GM23248 (cell line): ENCODE measurements at regions of chr1 and their contacts with region 1.

Region 1: DNA sequence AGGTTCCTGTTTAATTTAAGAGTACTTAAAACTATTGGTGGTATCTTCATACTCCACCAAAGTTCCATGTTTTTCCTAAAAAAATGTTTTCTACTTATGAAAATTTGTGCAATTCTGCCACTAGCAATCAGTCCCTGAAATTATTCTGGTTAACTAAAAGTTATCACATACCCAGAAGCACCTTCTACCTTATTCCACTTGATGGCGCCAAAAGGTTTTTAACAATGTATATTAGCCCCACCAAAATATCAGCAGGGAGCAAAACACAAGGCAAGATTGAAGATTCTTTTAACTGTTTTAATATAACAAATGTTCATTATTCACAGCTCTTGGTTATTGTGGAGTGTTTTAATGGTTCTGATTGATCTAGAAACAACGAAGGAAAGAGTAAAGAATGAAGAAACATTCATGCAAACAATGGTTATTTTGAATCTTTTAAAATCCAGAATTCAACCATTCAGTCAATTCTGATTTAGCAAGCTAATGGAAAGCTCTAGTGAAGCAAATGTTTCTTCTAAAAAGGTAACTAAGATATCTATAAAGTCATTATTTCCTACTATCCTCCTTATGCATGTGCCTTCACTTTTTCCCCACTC is 67.2 kb downstream of the TTLL7 start:
- DNase-seq: peak; percentile 81
- H3K4me3 ChIP-seq: no peak overlapping the region
- H3K27ac ChIP-seq: no peak overlapping the region
- H3K4me1 ChIP-seq: no peaks in the 10 kb centered on the region
- H3K27me3 ChIP-seq: no peaks in the 10 kb centered on the region

Region 2: DNA sequence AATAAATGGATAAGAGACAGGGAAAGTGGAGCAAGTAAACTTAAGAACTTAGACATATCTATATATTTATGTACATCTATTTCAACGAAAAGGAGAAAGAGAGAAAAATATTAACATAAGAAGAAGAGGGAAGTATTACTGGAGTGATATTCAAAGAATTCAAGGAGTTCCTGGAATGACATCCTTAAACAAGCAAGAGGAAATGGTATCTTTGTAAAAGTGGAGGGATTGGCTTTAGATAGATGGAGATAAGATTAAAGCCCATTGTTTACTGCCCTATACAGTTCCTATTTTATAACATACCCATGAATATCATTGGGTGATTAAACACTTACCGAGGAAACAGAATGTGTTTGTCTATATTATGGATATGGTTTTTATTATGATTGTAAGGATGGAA is 969.1 kb before region 1 on chr1:
- in situ Hi-C with region 1: no loop called
- DNase-seq: no peak
- H3K4me3 ChIP-seq: no peak overlapping the region
- H3K27ac ChIP-seq: no peak overlapping the region
- H3K4me1 ChIP-seq: no peaks in the 10 kb centered on the region
- H3K27me3 ChIP-seq: no peaks in the 10 kb centered on the region

Region 3: DNA sequence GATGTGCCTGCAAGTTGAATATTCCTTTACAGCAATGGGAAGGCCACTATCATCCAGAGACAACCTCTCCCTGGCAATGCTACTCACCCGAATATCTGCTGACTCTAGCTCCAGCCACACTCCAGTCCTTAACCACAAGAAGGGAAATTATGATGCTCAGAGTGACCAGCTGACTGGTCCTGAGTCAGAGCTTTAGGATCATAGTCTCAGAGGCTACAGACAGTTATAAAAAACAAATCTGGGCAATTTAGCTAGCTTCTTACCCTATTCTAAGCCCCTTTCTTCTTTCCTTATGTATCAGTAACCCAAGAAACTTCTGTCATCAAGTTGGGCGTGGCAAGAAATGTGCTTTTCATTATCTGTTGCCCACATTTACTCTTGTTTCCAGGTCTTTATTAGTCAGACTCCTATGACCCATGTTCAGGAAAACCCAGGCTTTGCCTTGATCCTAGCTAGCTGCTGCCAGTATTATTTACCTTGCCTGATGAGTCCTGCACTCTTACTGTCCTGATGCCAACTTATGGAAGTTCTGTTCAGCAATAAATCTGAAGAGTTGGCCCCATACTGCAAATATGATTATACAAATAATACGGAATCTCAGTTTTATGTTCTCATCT is 139.8 kb before region 1 on chr1:
- in situ Hi-C with region 1: no loop called
- DNase-seq: peak; percentile 82
- H3K4me3 ChIP-seq: no peak overlapping the region
- H3K27ac ChIP-seq: 0 out of 2 replicates have a peak overlapping the region, but pooled peaks have one; percentile 7
- H3K4me1 ChIP-seq: peaks cover 8% of the 10 kb centered on the region
- H3K27me3 ChIP-seq: no peaks in the 10 kb centered on the region

Region 4: GRCh38 chr1:84117868-84118267 is 186.1 kb after region 1 on chr1:
- in situ Hi-C with region 1: loop called (anchors 10 kb)
- DNase-seq: peak; percentile 73
- H3K4me3 ChIP-seq: no peak overlapping the region
- H3K27ac ChIP-seq: peak overlapping the region; percentile 46
- H3K4me1 ChIP-seq: 0 out of 2 replicates have a peak, but pooled peaks cover 8% of the 10 kb centered on the region
- H3K27me3 ChIP-seq: no peaks in the 10 kb centered on the region

Region 5: DNA sequence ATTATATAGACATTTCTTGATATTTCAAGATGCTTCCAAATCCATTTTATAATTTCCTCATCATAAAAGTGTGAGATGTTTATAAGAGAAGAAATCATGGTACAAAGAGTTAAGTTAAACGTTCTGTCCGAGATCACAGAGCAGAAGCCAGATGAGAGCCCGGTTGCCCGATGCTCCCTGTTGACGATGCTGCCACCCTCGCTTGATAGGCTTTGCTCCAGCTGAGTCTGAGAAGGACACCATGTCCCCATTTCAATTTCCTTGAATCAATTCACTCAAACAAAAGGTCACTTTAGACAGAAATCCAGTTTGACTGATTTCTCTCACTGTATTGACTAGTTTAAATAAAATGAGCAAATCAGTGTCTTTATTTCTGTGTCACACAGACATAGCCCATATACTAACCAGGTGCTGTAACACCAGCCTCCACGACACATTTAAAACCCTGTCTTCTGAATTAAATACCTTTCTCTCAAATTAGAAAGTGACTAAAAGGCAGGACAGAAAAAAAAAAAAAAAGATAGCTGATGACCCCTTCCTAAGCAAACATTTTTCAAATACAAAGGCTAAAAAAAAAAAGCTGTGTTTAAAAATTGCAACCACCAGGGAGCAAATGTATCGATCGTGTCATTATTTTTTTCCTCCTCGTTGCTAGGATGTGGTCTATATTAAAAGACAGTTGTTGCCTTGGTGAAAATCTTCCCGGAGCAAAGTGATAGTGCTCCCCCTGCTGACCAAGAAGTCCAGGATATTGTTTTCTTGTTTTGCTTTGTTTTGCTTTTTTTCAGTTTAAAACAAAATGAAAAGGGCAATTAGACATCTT is 501.7 kb after region 1 on chr1:
- in situ Hi-C with region 1: loop called (anchors 10 kb)
- DNase-seq: peak; percentile 81
- H3K4me3 ChIP-seq: peak overlapping the region; percentile 65
- H3K27ac ChIP-seq: no peak overlapping the region
- H3K4me1 ChIP-seq: peaks cover 9% of the 10 kb centered on the region; the same call in 1 of the 2 replicates
- H3K27me3 ChIP-seq: no peaks in the 10 kb centered on the region